ENCODE measurements at regions of chr12 and their contacts with region 1.

Region 1: DNA sequence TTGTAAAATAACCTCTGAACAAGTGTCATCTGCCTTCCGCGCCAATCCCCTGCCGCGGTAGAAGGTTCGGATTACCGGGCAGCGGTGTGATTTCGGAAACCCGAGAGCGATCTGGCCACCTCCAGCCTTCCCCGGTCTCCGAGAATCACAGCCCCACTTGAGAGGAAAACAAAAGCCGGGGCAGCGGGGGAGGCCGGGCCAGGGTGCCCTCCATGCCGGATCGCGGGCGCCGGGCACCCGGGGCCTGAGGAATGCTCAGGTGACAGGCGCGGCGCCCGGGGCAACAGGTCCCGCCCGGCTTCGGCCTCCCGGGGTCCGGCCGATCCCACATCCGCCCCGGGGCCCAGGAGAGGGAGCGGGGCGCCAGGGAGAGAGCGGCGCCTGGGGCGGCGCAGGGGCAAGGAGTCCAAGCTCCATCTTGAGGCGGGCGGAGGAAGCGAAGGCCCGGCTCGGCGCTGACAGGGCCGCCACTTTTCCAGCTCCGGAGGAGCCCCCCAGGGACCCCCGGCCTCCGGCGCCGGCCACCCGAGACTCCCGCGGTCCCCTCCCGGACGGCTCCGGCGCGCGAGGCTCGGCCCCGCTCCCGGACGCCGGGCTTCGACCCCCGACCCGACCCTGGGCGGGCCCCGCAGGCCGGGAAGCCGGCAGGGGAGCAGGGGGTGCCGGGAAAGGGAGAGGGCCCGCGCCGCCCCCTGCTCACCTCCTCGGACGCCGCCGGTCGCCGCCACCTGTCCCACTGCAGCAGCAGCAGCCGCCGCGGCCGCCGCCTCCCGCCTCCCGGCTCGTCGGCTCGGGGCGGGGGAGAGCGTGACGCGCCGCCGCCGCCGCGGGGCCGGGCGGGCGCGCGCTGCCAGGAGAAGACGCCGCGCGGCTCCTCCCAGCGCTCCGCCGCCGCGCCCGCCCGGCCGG is at the start of gene CLIP1:
- DNase-seq: peak; percentile 57
- H3K4me3 Mint-ChIP-seq: peak within 1 kb of the TSS; percentile 94
- H3K27ac Mint-ChIP-seq: peak within 1 kb of the TSS; percentile 89
- H3K4me1 Mint-ChIP-seq: peaks cover 33% of the 10 kb centered on the region
- H3K27me3 Mint-ChIP-seq: peaks cover 2% of the 10 kb centered on the region
- total RNA-seq, gene CLIP1: 64.1 and 71.9 TPM in 2 replicates

Region 2: GRCh38 chr12:122452701-122453285 is 30.7 kb after region 1 on chr12:
- intact Hi-C with region 1: loop called (anchors 1 kb)
- DNase-seq: no peak
- H3K4me3 Mint-ChIP-seq: peak overlapping the region; percentile 78
- H3K27ac Mint-ChIP-seq: peak overlapping the region; percentile 98
- H3K4me1 Mint-ChIP-seq: peaks cover 38% of the 10 kb centered on the region
- H3K27me3 Mint-ChIP-seq: no peaks in the 10 kb centered on the region